Activated B cell treated with CpG ODN at 0.5 μM for 24 hours (primary cell): ENCODE measurements at regions of chr7 and their contacts with region 1.

Region 1: GRCh38 chr7:24948739-24949138 is 31.2 kb downstream of the OSBPL3 start:
- DNase-seq: no peak
- ATAC-seq: peak; percentile 47
- H3K4me3 Mint-ChIP-seq: no peak overlapping the region
- H3K27ac Mint-ChIP-seq: no peak overlapping the region
- H3K4me1 Mint-ChIP-seq: peaks cover 44% of the 10 kb centered on the region
- H3K27me3 Mint-ChIP-seq: no peaks in the 10 kb centered on the region
- CTCF ChIP-seq: no peak

Region 2: GRCh38 chr7:24932815-24933214 is 15.9 kb before region 1 on chr7:
- CTCF ChIA-PET with region 1: no interaction called
- POLR2A ChIA-PET with region 1: no interaction called
- intact Hi-C with region 1: loop called (anchors 2 kb)
- DNase-seq: peak; percentile 18
- ATAC-seq: peak; percentile 86
- H3K4me3 Mint-ChIP-seq: peak overlapping the region; percentile 57
- H3K27ac Mint-ChIP-seq: peak overlapping the region; percentile 50
- H3K4me1 Mint-ChIP-seq: peaks cover 42% of the 10 kb centered on the region
- H3K27me3 Mint-ChIP-seq: no peaks in the 10 kb centered on the region
- CTCF ChIP-seq: no peak

Region 3: GRCh38 chr7:24965831-24966709 is 17.3 kb after region 1 on chr7:
- CTCF ChIA-PET with region 1: no interaction called
- POLR2A ChIA-PET with region 1: no interaction called
- intact Hi-C with region 1: loop called (anchors 1 kb)
- DNase-seq: no peak
- ATAC-seq: peak; percentile 57
- H3K4me3 Mint-ChIP-seq: peak overlapping the region; percentile 42
- H3K27ac Mint-ChIP-seq: peak overlapping the region; percentile 84
- H3K4me1 Mint-ChIP-seq: peaks cover 74% of the 10 kb centered on the region
- H3K27me3 Mint-ChIP-seq: no peaks in the 10 kb centered on the region
- CTCF ChIP-seq: no peak

Region 4: DNA sequence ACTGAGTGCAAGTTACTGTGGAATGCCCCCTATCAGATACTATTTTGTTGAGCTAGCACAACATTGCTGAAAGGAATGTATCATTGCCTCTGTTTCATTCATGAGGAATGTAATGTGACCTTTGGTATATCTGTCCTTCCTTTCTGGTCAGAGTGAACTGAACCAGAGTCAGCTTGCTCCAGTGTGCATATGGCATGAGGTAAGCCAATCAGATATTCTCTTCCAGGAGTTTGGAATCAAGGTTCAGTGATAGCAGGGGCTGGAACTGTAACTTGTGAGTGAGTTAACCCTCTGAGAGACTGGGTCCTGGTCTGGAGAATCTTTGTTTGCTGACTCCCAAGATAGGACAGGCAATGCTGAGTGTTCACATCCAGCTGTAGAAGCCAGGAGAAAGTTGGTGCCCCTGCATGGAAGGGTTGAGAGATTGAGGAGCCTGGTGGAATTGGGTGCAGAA is 76.5 kb after region 1 on chr7:
- CTCF ChIA-PET with region 1: no interaction called
- POLR2A ChIA-PET with region 1: no interaction called
- intact Hi-C with region 1: no loop called
- DNase-seq: no peak
- ATAC-seq: no peak
- H3K4me3 Mint-ChIP-seq: no peak overlapping the region
- H3K27ac Mint-ChIP-seq: no peak overlapping the region
- H3K4me1 Mint-ChIP-seq: peaks cover 2% of the 10 kb centered on the region
- H3K27me3 Mint-ChIP-seq: peaks cover 25% of the 10 kb centered on the region
- CTCF ChIP-seq: no peak

Region 5: GRCh38 chr7:25333296-25333928 is 384.7 kb after region 1 on chr7:
- CTCF ChIA-PET with region 1: no interaction called
- POLR2A ChIA-PET with region 1: no interaction called
- intact Hi-C with region 1: no loop called
- DNase-seq: no peak
- ATAC-seq: no peak
- H3K4me3 Mint-ChIP-seq: no peak overlapping the region
- H3K27ac Mint-ChIP-seq: no peak overlapping the region
- H3K4me1 Mint-ChIP-seq: no peaks in the 10 kb centered on the region
- H3K27me3 Mint-ChIP-seq: peaks cover 20% of the 10 kb centered on the region
- CTCF ChIP-seq: no peak